ENCODE measurements at regions of chr1 and their contacts with region 1.

Region 1: GRCh38 chr1:2556277-2556677 is at the start of gene TNFRSF14:
- DNase-seq: peak; percentile 91
- ATAC-seq: peak; percentile 72
- H3K4me3 Mint-ChIP-seq: peak within 1 kb of the TSS; percentile 98
- H3K27ac Mint-ChIP-seq: peak within 1 kb of the TSS; percentile 99
- H3K4me1 Mint-ChIP-seq: peaks cover 33% of the 10 kb centered on the region
- H3K27me3 Mint-ChIP-seq: no peaks in the 10 kb centered on the region
- total RNA-seq, gene TNFRSF14: 106 to 111 TPM

Region 2: GRCh38 chr1:2525920-2526823 is 30.1 kb before region 1 on chr1 and contains the start of gene PANK4:
- CTCF ChIA-PET with region 1: interaction called, 20 read pairs
- DNase-seq: peak; percentile 94
- ATAC-seq: peak; percentile 88
- H3K4me3 Mint-ChIP-seq: peak within 1 kb of the TSS; percentile 73
- H3K27ac Mint-ChIP-seq: peak within 1 kb of the TSS; percentile 88
- H3K4me1 Mint-ChIP-seq: peaks cover 39% of the 10 kb centered on the region
- H3K27me3 Mint-ChIP-seq: peaks cover 15% of the 10 kb centered on the region
- total RNA-seq, gene PANK4: 72.2 to 91.2 TPM

Region 3: GRCh38 chr1:2575801-2576663 is 19.8 kb after region 1 on chr1:
- CTCF ChIA-PET with region 1: interaction called, 32 read pairs
- DNase-seq: no peak
- ATAC-seq: no peak
- H3K4me3 Mint-ChIP-seq: no peak overlapping the region
- H3K27ac Mint-ChIP-seq: no peak overlapping the region
- H3K4me1 Mint-ChIP-seq: peaks cover 43% of the 10 kb centered on the region
- H3K27me3 Mint-ChIP-seq: peaks cover 3% of the 10 kb centered on the region

Region 4: GRCh38 chr1:2586154-2587070 is 30.1 kb after region 1 on chr1 and contains the start of gene PRXL2B:
- CTCF ChIA-PET with region 1: interaction called, 68 read pairs
- DNase-seq: peak; percentile 99
- ATAC-seq: peak; percentile 82
- H3K4me3 Mint-ChIP-seq: peak within 1 kb of the TSS; percentile 82
- H3K27ac Mint-ChIP-seq: peak within 1 kb of the TSS; percentile 93
- H3K4me1 Mint-ChIP-seq: peaks cover 35% of the 10 kb centered on the region
- H3K27me3 Mint-ChIP-seq: no peaks in the 10 kb centered on the region
- total RNA-seq, gene PRXL2B: 22.4 to 26.2 TPM